ENCODE measurements at regions of chr3 and their contacts with region 1.

Region 1: GRCh38 chr3:9902372-9903237 is at the start of gene IL17RE:
- DNase-seq: no peak
- H3K4me3 ChIP-seq: peak within 1 kb of the TSS; percentile 43
- CTCF ChIP-seq: no peak

Region 2: GRCh38 chr3:9890249-9891071 is 12.1 kb before region 1 on chr3 and contains the start of gene JAGN1:
- CTCF ChIA-PET with region 1: interaction called, 5 read pairs
- POLR2A ChIA-PET with region 1: interaction called, 10 read pairs
- DNase-seq: no peak
- H3K4me3 ChIP-seq: peak within 1 kb of the TSS; percentile 96
- CTCF ChIP-seq: no peak

Region 3: GRCh38 chr3:9915254-9916141 is 12.9 kb after region 1 on chr3:
- CTCF ChIA-PET with region 1: interaction called, 16 read pairs
- POLR2A ChIA-PET with region 1: interaction called, 5 read pairs
- DNase-seq: no peak
- H3K4me3 ChIP-seq: peak overlapping the region; percentile 61
- CTCF ChIP-seq: peak; percentile 65

Region 4: GRCh38 chr3:9957214-9957613 is 54.6 kb after region 1 on chr3:
- CTCF ChIA-PET with region 1: no interaction called
- POLR2A ChIA-PET with region 1: no interaction called
- DNase-seq: no peak
- H3K4me3 ChIP-seq: no peak overlapping the region
- CTCF ChIP-seq: no peak